Activated T-helper 1 cell treated with anti-CD3 and anti-CD28 coated beads, Interleukin-12 subunit alpha, Interleukin-12 subunit beta, Interleukin-2, Interleukin-4 antibody, amounts not matched to agents 30 ng/mL and 10 ng/mL and 1 ng/mL, durations not matched to agents 14 hours and 24 hours and 36 hours (primary cell): ENCODE measurements at regions of chr15 and their contacts with region 1.

Region 1: GRCh38 chr15:85597155-85597815 is 197.4 kb downstream of the KLHL25 start:
- DNase-seq: peak; percentile 21
- H3K4me3 Mint-ChIP-seq: peak overlapping the region; percentile 53
- H3K27ac Mint-ChIP-seq: peak overlapping the region; percentile 41
- H3K4me1 Mint-ChIP-seq: peaks cover 52% of the 10 kb centered on the region
- H3K27me3 Mint-ChIP-seq: no peaks in the 10 kb centered on the region

Region 2: DNA sequence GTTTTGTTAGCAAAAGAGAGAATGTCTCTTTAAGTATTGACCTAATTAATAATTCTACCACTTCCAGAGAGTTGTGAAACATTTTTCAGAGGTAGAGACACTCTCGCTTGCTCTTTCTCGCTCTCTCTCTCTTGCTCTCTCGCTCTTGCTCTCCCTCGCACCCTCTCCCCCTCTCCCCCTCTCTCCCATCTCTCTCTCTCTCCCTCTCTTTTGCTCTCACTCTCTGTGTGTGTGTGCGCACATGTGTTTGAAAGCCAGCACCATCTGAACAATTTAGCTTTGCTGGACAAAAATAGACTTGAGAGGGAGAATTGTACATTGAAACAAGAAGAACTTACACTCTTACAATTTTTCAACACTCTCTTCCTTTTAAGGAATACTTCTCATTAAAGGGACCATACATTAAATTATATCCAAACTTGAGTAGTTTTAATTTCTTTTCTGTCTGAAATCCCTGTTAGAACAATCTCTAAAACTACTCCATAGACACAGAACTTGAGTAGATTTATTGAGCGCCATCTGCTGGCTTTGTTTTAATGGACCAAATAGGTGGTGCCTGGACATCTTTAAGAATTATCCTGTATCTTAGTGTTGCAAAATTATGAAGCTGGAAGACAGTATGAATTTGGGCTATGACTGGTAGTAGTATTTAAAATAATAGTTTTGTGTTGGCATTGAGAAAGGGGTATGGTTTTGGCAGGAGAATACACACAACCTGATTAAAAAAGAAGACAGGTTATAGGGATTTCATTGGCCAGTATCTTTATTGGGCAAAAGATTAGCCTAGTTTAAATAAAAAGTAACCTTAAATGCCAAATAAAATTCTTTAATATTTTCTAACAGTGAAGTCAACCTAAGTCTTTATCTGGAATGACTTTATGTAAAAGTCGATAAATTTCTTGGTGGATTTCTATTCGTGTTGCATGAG is 92.3 kb before region 1 on chr15:
- intact Hi-C with region 1: no loop called
- DNase-seq: peak; percentile 5
- H3K4me3 Mint-ChIP-seq: no peak overlapping the region
- H3K27ac Mint-ChIP-seq: no peak overlapping the region
- H3K4me1 Mint-ChIP-seq: peaks cover 20% of the 10 kb centered on the region
- H3K27me3 Mint-ChIP-seq: no peaks in the 10 kb centered on the region

Region 3: GRCh38 chr15:85607842-85608241 is 10.6 kb after region 1 on chr15:
- intact Hi-C with region 1: loop called (anchors 1 kb)
- DNase-seq: no peak
- H3K4me3 Mint-ChIP-seq: no peak overlapping the region
- H3K27ac Mint-ChIP-seq: peak overlapping the region; percentile 21
- H3K4me1 Mint-ChIP-seq: peaks cover 18% of the 10 kb centered on the region
- H3K27me3 Mint-ChIP-seq: no peaks in the 10 kb centered on the region

Region 4: DNA sequence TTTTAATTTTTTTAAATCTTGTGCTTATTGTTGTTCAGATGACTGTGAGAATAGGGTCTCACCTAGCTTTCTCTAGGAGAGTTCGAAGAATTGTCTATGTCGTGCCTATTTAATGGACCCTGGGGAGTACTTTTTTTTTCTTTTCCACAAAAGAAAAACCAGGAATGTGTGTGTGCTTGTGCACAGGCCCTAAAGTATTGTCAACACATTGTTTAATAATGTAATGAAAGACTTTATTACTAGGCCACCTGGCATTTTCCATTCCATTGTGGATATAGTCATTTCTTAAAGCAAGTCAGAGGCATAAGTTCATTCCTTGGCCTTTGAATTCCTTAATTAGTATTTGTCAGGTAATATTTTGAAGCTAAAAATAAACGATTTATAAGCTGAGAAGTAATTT is 61.5 kb after region 1 on chr15:
- intact Hi-C with region 1: no loop called
- DNase-seq: no peak
- H3K4me3 Mint-ChIP-seq: no peak overlapping the region
- H3K27ac Mint-ChIP-seq: no peak overlapping the region
- H3K4me1 Mint-ChIP-seq: no peaks in the 10 kb centered on the region
- H3K27me3 Mint-ChIP-seq: no peaks in the 10 kb centered on the region

Region 5: GRCh38 chr15:86044981-86045380 is 447.7 kb after region 1 on chr15:
- intact Hi-C with region 1: no loop called
- DNase-seq: no peak
- H3K4me3 Mint-ChIP-seq: no peak overlapping the region
- H3K27ac Mint-ChIP-seq: no peak overlapping the region
- H3K4me1 Mint-ChIP-seq: no peaks in the 10 kb centered on the region
- H3K27me3 Mint-ChIP-seq: peaks cover 6% of the 10 kb centered on the region